ENCODE measurements at regions of chr1 and their contacts with region 1.

Region 1: DNA sequence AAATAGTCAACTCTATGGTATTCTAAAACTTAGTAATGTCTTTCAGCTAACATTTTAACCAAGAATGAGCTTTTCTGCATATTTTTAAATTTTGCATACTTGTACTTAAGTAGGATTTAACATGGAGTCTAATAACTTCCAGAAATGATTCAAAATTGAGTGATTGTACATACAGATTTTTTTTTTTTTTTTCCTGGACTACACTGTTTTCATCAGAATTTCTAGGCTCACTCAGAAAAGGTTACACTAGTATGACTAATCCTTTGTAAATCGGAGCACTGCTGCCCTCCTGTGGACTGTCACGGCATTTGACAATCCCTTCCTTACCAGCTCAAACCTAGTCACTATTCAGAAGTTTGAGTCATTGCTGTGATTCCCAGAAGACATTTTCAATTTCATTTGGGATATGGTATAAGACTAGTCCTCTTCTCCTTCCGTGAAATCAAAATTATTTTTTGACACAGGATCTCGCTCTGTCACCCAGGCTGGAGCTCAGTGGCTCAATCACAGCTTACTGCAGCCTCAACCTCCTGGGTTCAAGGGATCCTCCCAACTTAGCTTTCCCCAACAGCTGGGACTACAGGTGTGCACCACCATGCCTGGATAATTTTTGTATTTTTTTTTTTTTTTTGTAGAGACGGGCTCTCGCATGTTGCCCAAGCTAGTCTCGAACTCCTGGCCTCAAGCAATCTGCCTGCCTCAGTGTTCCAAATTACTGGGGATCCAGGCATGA is 45.5 kb downstream of the CD46 start:
- DNase-seq: peak; percentile 91
- H3K4me3 ChIP-seq: no peak overlapping the region
- H3K27ac ChIP-seq: peak overlapping the region; percentile 49
- H3K4me1 ChIP-seq: peaks cover 4% of the 10 kb centered on the region
- H3K27me3 ChIP-seq: no peaks in the 10 kb centered on the region
- CTCF ChIP-seq: peak; percentile 71 to 72
- POLR2A ChIP-seq: peak; percentile 40

Region 2: DNA sequence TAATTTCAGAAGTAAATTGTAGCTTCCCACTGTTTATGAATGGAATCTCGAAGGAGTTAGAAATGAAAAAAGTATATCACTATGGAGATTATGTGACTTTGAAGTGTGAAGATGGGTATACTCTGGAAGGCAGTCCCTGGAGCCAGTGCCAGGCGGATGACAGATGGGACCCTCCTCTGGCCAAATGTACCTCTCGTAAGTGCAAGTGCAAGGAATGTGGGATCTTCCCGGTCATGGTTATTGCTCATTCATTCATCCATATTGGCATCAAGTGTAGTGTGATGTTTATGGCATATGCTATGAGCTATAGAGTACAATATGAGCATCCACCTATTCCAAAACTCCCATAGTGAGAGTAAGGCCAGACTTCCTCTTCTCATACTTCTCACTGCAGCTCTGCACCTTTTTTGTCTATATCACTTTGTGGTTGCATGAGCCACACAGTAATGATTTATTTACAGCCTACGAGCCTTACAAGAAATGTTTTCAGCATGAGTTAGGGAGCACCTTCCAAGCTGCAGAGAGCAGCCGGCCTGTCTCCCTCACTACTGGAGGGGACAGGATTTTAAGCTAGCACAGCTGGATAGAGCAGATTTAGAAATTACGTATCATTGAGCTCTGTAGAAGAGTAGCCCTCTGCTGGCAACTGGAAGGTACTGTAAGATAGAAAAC is 177.4 kb before region 1 on chr1:
- CTCF ChIA-PET with region 1: interaction called, 10 read pairs
- POLR2A ChIA-PET with region 1: no interaction called
- dilution Hi-C with region 1: no loop called
- intact Hi-C with region 1: no loop called
- DNase-seq: peak; percentile 50
- H3K4me3 ChIP-seq: no peak overlapping the region
- H3K27ac ChIP-seq: no peak overlapping the region
- H3K4me1 ChIP-seq: no peaks in the 10 kb centered on the region
- H3K27me3 ChIP-seq: peaks cover 2 to 6% of the 10 kb centered on the region in 2 experiments
- CTCF ChIP-seq: peak; percentile 49 to 77
- POLR2A ChIP-seq: no peak

Region 3: DNA sequence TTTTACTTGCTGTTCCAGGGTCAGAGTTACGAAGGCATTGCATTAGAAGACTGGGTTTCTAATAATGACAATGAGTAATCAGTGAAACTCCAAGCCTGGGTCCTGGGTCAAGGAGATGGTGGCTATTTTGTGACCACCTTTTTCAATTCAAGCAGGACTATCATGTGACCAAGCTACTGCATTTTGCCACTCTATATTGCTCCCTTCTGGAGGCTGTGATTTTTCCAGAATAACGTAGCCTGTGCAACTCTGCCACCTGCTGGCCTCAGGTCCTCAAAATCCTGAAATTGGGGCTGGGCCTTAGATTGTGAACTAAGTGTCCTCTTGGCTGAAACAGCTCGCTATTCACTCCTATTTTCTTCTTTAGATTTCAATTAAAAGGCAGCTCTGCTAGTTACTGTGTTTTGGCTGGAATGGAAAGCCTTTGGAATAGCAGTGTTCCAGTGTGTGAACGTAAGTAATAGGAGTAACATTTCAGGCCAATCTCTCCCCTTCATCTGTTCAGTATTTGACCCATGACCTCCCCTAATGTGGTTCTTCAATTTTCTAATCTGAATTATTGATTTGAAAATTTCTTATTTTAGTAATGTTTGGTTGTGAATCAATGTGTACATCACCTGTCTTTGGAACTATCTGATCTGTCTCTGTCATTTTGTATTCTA is 98.4 kb before region 1 on chr1:
- CTCF ChIA-PET with region 1: interaction called, 19 read pairs
- POLR2A ChIA-PET with region 1: no interaction called
- dilution Hi-C with region 1: no loop called
- intact Hi-C with region 1: no loop called
- DNase-seq: peak; percentile 68
- H3K4me3 ChIP-seq: no peak overlapping the region
- H3K27ac ChIP-seq: no peak overlapping the region
- H3K4me1 ChIP-seq: no peaks in the 10 kb centered on the region
- H3K27me3 ChIP-seq: no peaks in the 10 kb centered on the region
- CTCF ChIP-seq: peak; percentile 56 to 71
- POLR2A ChIP-seq: no peak

Region 4: GRCh38 chr1:207751790-207752455 is 45.5 kb before region 1 on chr1 and contains the start of gene CD46:
- CTCF ChIA-PET with region 1: interaction called, 5 read pairs
- POLR2A ChIA-PET with region 1: no interaction called
- dilution Hi-C with region 1: no loop called
- intact Hi-C with region 1: loop called (anchors 2 kb)
- DNase-seq: peak; percentile 95
- H3K4me3 ChIP-seq: peak within 1 kb of the TSS; percentile 37 to 86 (median 56)
- H3K27ac ChIP-seq: peak within 1 kb of the TSS; percentile 85
- H3K4me1 ChIP-seq: peaks cover 30% of the 10 kb centered on the region
- H3K27me3 ChIP-seq: no peaks in the 10 kb centered on the region
- CTCF ChIP-seq: no peak
- POLR2A ChIP-seq: peak; percentile 83
- total RNA-seq, gene CD46: 243 and 256 TPM in 2 replicates

Region 5: GRCh38 chr1:207868774-207869721 is 71.7 kb after region 1 on chr1:
- CTCF ChIA-PET with region 1: interaction called, 15 read pairs
- POLR2A ChIA-PET with region 1: no interaction called
- dilution Hi-C with region 1: no loop called
- intact Hi-C with region 1: no loop called
- DNase-seq: peak; percentile 83
- H3K4me3 ChIP-seq: peak overlapping the region; percentile 64 to 67 (median 65)
- H3K27ac ChIP-seq: peak overlapping the region; percentile 52
- H3K4me1 ChIP-seq: peaks cover 17% of the 10 kb centered on the region
- H3K27me3 ChIP-seq: no peaks in the 10 kb centered on the region
- CTCF ChIP-seq: peak; percentile 73 to 95
- POLR2A ChIP-seq: peak; percentile 59

Measured in endothelial cell of umbilical vein (primary cell).